PC-9 (cell line): ENCODE measurements at regions of chr12 and their contacts with region 1.

Region 1: DNA sequence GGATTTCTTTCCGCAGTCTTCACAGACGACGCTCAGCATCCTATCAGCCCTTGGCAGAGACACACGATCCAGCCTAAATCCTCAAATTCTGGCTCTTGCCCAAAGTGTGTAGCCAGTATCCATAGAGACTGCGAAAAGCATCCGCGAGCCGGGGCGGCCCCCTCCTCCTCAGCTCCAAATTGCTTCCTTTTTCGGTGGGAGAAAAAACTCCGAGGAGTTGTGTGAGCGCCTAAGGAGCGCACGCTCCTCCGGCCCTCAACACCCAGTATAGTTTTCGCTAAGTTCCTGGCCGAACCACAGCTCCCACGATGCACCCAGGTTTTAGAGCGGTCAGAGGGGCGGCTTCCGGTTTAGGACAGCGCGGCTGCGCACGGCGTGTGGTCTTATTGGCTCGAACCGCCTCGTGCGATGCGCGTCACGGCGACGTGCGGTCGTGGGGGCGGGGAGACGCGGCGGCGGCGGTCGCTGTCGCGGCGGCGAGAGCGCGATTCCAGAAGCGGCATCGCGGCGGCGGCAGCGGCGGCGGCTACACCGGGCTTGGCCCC is at the start of gene ADIPOR2:
- DNase-seq: peak; percentile 95 to 96
- H3K4me3 ChIP-seq: peak within 1 kb of the TSS; percentile 79
- H3K27ac ChIP-seq: peak within 1 kb of the TSS; percentile 89
- H3K4me1 ChIP-seq: peaks cover 27% of the 10 kb centered on the region
- H3K27me3 ChIP-seq: no peaks in the 10 kb centered on the region
- CTCF ChIP-seq: no peak
- total RNA-seq, gene ADIPOR2: 76.0 and 107 TPM in 2 replicates

Region 2: DNA sequence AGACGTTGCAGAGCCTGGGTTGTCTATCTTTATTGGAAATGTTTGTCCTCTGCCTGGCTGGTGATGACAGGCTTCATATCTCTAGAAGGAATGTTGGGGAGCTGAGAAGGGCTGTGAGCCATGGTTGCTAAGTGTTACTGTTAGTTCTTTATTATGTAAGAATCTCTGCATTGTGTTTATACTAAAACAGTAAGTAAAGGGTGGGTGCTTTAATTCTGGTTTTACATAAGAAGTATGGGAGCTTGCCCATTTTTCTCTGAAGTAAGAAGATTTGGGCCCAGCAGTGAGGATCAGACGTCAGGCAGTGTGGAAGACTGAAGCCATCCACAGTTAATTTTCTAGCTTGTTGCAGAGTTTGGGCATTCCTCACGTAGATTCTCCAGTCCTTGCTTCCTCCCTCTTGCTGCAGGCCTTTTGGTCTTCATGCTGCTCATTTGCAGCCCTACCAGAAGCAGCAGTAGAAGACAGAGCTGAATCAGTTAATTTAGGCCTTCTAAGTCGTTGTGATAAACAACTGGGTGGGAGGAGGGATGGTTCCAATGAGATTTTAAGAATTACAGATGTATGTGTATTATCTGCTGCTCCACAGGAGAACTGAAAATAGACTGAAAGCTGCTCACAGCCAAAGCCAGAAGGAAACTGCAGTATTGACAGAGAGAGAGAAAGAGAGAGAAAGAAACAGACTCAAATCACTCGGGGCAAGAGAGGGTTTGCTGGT is 40.2 kb before region 1 on chr12:
- CTCF ChIA-PET with region 1: interaction called, 12 read pairs
- POLR2A ChIA-PET with region 1: no interaction called
- intact Hi-C with region 1: no loop called
- DNase-seq: no peak
- H3K4me3 ChIP-seq: no peak overlapping the region
- H3K27ac ChIP-seq: no peak overlapping the region
- H3K4me1 ChIP-seq: no peaks in the 10 kb centered on the region
- H3K27me3 ChIP-seq: no peaks in the 10 kb centered on the region
- CTCF ChIP-seq: no peak

Region 3: GRCh38 chr12:1661553-1662335 is 28.9 kb before region 1 on chr12:
- CTCF ChIA-PET with region 1: no interaction called
- POLR2A ChIA-PET with region 1: interaction called, 3 read pairs
- intact Hi-C with region 1: loop called (anchors 2 kb)
- DNase-seq: peak; percentile 86 to 98
- H3K4me3 ChIP-seq: no peak overlapping the region
- H3K27ac ChIP-seq: peak overlapping the region; percentile 57
- H3K4me1 ChIP-seq: peaks cover 16% of the 10 kb centered on the region
- H3K27me3 ChIP-seq: no peaks in the 10 kb centered on the region
- CTCF ChIP-seq: no peak

Region 4: DNA sequence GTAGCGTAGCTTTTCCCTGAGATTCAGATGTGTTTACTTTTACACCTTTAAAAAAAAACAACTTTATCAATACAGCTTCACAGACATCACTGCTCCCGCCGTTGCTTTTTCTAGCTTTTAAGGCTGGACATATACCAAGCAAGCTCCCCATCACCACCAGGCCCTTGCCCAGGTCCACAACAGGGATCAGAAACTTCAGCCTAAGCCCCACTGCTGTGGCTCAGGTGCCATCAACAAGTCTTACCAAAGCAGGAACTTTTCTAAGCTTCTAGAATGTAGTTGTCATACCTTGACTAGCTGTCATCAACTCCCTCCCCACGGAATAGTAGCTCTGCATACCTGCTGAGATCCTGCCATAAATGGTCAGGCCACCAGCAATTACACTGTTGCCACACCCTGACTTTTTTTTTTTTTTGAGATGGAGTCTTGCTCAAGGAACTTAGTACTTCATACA is 19.8 kb before region 1 on chr12:
- CTCF ChIA-PET with region 1: no interaction called
- POLR2A ChIA-PET with region 1: interaction called, 30 read pairs
- intact Hi-C with region 1: loop called (anchors 1 kb)
- DNase-seq: peak; percentile 56 to 92
- H3K4me3 ChIP-seq: no peak overlapping the region
- H3K27ac ChIP-seq: peak overlapping the region; percentile 90
- H3K4me1 ChIP-seq: peaks cover 24% of the 10 kb centered on the region
- H3K27me3 ChIP-seq: no peaks in the 10 kb centered on the region
- CTCF ChIP-seq: no peak

Region 5: GRCh38 chr12:1676043-1676442 is 14.6 kb before region 1 on chr12:
- CTCF ChIA-PET with region 1: no interaction called
- POLR2A ChIA-PET with region 1: interaction called, 30 read pairs
- intact Hi-C with region 1: loop called (anchors 1 kb)
- DNase-seq: no peak
- H3K4me3 ChIP-seq: no peak overlapping the region
- H3K27ac ChIP-seq: no peak overlapping the region
- H3K4me1 ChIP-seq: peaks cover 5% of the 10 kb centered on the region
- H3K27me3 ChIP-seq: no peaks in the 10 kb centered on the region
- CTCF ChIP-seq: no peak

Region 6: GRCh38 chr12:1706633-1706981 is 16.0 kb after region 1 on chr12:
- CTCF ChIA-PET with region 1: no interaction called
- POLR2A ChIA-PET with region 1: interaction called, 10 read pairs
- intact Hi-C with region 1: no loop called
- DNase-seq: no peak
- H3K4me3 ChIP-seq: no peak overlapping the region
- H3K27ac ChIP-seq: peak overlapping the region; percentile 6; the same call in 1 of the 2 replicates
- H3K4me1 ChIP-seq: peaks cover 25% of the 10 kb centered on the region
- H3K27me3 ChIP-seq: no peaks in the 10 kb centered on the region
- CTCF ChIP-seq: no peak

Region 7: DNA sequence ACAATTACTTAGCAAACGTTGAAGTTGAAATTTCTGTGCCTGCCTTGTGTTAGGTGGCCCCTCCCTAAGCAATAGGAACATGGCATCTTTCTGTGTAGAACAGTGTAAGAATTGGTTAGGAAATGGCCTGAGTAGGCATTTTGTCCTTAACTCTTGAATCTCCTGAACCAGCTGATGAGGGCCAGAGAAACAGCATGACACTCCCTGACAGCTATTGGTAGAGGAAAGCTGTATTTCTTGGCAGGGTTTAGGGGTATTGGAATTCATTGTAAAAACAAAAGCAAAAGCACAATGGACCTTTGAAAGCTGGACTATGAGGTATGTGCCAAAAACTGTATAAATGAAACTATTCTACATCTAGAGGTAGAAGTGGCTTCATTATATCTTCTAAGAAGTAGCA is 89.1 kb after region 1 on chr12:
- CTCF ChIA-PET with region 1: interaction called, 10 read pairs
- POLR2A ChIA-PET with region 1: interaction called, 5 read pairs
- intact Hi-C with region 1: no loop called
- DNase-seq: no peak
- H3K4me3 ChIP-seq: no peak overlapping the region
- H3K27ac ChIP-seq: no peak overlapping the region
- H3K4me1 ChIP-seq: peaks cover 27% of the 10 kb centered on the region
- H3K27me3 ChIP-seq: no peaks in the 10 kb centered on the region
- CTCF ChIP-seq: no peak

Region 8: DNA sequence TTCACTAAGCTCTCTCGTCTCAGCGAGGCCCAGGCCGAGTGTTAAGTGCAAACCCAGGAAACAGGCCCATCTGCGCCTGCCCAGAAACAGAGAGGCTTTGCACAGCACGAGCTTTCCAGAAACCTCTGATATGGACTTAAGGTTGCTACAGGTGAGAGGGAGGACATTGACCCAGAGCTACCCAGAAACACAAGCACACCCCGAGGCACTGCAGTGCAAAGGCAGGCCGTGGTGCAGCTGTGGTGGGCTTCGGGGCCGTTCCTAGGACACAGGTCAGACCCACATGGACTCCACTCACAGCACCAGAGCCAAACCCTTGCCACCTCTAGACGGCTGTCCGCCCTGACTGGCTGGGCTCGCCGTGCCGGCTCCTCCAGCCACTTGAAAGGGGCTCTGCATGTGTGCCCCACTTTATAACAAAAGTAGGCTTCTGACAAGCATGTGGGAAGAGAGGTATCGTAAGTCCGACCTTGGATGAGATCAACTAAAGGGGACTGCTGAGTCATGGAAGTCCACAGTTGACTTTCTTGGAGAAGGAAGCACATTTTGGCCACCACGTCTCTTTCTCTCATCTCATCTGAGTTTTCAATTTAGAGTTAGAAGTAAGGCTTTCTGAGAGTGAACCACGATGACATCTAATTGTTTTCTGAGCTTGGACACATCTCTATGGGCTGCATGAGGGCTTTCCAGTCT is 189.6 kb after region 1 on chr12:
- CTCF ChIA-PET with region 1: no interaction called
- POLR2A ChIA-PET with region 1: no interaction called
- intact Hi-C with region 1: no loop called
- DNase-seq: no peak
- H3K4me3 ChIP-seq: no peak overlapping the region
- H3K27ac ChIP-seq: no peak overlapping the region
- H3K4me1 ChIP-seq: no peaks in the 10 kb centered on the region
- H3K27me3 ChIP-seq: peaks cover 98% of the 10 kb centered on the region
- CTCF ChIP-seq: no peak